ENCODE measurements at regions of chr13 and their contacts with region 1.

Region 1: DNA sequence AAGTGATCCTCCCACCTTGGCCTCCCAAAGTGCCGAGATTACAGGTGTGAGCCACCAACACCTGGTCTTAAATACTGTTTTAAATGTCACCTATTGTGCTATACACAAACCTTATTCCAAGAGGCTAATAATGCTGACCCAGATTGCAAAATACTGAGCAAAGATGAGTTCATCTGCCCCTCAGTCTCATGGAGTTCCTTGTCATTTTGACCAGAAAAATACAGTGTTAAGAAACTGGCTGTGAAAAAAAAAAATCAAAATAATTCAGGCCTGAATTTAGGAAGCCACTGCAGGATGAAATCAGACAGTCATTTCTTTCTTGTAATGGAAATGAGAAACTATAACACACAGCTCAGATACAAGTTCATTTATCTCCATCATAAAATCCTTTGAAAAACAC is 59.9 kb downstream of the TBC1D4 start:
- DNase-seq: no peak
- ATAC-seq: no peak
- H3K4me3 ChIP-seq: no peak overlapping the region
- H3K27ac ChIP-seq: no peak overlapping the region
- H3K4me1 ChIP-seq: peaks cover 8% of the 10 kb centered on the region
- H3K27me3 ChIP-seq: no peaks in the 10 kb centered on the region

Region 2: GRCh38 chr13:74476365-74476764 is 945.7 kb before region 1 on chr13:
- intact Hi-C with region 1: no loop called
- DNase-seq: no peak
- ATAC-seq: no peak
- H3K4me3 ChIP-seq: no peak overlapping the region
- H3K27ac ChIP-seq: no peak overlapping the region
- H3K4me1 ChIP-seq: no peaks in the 10 kb centered on the region
- H3K27me3 ChIP-seq: no peaks in the 10 kb centered on the region

Region 3: GRCh38 chr13:75473468-75473867 is 51.4 kb after region 1 on chr13:
- intact Hi-C with region 1: loop called in 2 of 4 experiments (anchors 5 to 10 kb)
- DNase-seq: no peak
- ATAC-seq: peak; percentile 58 to 65
- H3K4me3 ChIP-seq: no peak overlapping the region
- H3K27ac ChIP-seq: no peak overlapping the region
- H3K4me1 ChIP-seq: peaks cover 8% of the 10 kb centered on the region
- H3K27me3 ChIP-seq: no peaks in the 10 kb centered on the region